ENCODE measurements at regions of chr11 and their contacts with region 1.

Region 1: GRCh38 chr11:118171269-118172062 is 5.0 kb downstream of the SCN2B start:
- DNase-seq: peak; percentile 82
- ATAC-seq: peak; percentile 90
- H3K4me3 Mint-ChIP-seq: no peak overlapping the region
- H3K27ac Mint-ChIP-seq: no peak overlapping the region
- H3K4me1 Mint-ChIP-seq: peaks cover 10% of the 10 kb centered on the region
- H3K27me3 Mint-ChIP-seq: peaks cover 16% of the 10 kb centered on the region

Region 2: DNA sequence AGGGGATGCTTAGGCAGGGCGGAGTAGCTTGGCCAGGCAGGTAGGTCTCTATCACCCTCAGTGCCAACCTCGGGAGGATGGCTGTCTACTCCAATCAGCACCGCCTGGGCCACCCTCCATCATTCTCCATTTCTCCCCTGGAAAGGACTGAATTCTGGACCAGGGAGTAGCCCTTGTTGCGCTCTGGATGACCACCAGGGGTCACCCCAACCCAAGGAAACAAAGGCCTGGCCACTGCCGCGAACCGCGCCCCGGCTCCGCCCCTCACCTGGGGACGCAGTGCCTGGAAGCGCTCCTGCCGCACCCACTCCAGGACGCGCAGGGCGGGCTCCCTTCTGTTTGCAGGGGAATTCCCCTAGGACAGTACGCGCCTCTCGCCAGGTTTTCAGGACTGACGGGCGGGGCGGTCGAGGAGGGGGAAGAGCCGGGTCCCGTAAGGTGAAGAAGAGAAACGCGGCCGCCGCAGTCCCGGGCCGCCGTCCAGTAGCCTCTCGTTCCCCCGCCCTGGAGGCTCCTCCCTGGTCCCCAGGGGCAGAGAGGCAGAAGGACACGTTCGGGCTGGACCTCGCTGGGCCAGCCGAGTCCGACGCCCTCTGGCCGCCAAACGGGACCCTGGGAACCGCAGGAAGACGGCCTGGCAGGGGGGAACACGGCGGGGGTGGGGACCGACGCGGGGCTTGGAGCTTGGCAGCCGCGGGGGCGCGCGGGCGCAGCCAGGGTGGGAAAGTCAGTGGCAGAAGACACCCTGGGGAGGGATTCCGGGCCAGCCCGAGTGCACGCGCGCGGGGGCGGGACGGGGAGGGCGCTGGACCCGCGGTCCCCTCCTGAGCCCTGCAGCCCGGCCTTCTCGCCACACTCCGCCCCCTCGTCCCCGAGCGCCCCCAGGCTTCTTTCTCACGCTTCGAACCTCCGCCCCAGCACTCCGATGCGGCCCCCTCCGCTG is 25.9 kb before region 1 on chr11:
- CTCF ChIA-PET with region 1: interaction called, 100 read pairs
- POLR2A ChIA-PET with region 1: no interaction called
- DNase-seq: peak; percentile 92
- ATAC-seq: peak; percentile 97
- H3K4me3 Mint-ChIP-seq: peak overlapping the region; percentile 79
- H3K27ac Mint-ChIP-seq: no peak overlapping the region
- H3K4me1 Mint-ChIP-seq: peaks cover 19% of the 10 kb centered on the region
- H3K27me3 Mint-ChIP-seq: peaks cover 54% of the 10 kb centered on the region

Region 3: DNA sequence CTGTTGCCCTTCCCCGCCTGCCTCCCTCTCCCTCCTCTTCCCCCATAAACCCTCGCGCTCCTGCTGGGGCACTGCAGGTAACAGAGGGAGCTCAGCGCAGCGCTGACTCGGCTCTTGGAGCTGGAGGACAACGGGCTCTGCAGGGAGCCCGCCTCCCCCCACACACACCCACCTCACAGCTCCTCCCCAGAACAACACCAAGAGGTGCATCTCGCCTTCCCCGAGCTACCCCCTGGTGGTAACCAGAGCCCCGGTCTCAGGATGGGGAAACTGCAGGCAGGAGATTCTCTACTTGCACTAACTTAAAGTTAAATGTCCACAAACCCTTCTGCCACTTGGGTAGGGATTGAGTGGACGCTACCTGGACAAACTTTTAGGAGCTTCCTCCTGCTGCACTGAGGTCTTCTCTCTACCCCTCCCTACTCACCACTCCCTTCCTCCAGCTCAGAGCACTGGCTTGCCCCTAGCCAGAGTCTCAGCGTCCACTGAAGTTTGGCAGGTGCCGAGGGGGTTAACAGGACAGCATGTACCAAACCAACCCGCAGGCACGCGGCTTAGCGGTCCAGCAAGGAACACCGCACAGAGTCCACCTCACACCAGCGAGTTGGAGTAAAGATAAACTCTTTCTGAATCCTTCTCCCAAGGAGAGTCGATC is 14.8 kb before region 1 on chr11:
- CTCF ChIA-PET with region 1: interaction called, 83 read pairs
- POLR2A ChIA-PET with region 1: interaction called, 4 read pairs
- DNase-seq: peak; percentile 58
- ATAC-seq: peak; percentile 74
- H3K4me3 Mint-ChIP-seq: no peak overlapping the region
- H3K27ac Mint-ChIP-seq: no peak overlapping the region
- H3K4me1 Mint-ChIP-seq: peaks cover 29% of the 10 kb centered on the region
- H3K27me3 Mint-ChIP-seq: peaks cover 79% of the 10 kb centered on the region

Region 4: DNA sequence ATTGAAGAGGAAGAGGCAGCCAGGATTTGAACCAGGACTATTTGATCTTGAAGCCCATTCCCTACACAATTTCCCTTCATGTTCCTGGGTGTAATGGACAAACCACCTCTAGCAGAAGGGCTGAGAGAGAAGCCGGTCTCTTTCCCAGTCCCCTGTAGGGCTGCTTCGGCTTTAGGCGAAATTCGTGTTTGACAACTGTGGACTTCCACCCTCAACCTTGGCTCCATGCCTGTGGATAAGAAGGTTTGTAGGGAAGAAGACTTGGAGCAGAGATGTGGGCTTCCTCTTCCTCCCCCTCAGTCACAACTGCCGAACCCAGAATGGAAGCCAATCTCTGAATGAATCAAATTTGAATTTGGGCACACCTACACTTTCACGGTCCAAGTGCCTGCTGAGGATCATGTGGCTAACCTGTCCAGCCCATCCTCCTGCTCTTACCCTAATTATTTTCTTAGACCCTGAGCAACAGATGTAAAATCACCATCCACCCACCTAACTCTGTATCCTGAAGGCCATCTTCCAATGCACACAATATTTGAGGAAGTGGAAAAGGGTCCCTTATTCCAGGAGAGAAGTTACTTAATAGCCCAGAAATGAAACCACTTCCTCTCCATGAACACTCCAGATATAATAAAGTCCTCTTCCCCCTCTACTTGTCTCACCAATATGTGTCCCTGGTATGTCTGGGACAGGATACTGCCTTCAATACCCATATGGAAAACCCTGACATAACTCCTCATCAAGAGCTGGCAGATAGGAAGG is 15.1 kb after region 1 on chr11:
- CTCF ChIA-PET with region 1: interaction called, 44 read pairs
- POLR2A ChIA-PET with region 1: no interaction called
- DNase-seq: no peak
- ATAC-seq: no peak
- H3K4me3 Mint-ChIP-seq: no peak overlapping the region
- H3K27ac Mint-ChIP-seq: no peak overlapping the region
- H3K4me1 Mint-ChIP-seq: peaks cover 3% of the 10 kb centered on the region
- H3K27me3 Mint-ChIP-seq: peaks cover 31% of the 10 kb centered on the region

Region 5: GRCh38 chr11:118311518-118311917 is 140.1 kb after region 1 on chr11:
- CTCF ChIA-PET with region 1: no interaction called
- POLR2A ChIA-PET with region 1: no interaction called
- DNase-seq: no peak
- ATAC-seq: no peak
- H3K4me3 Mint-ChIP-seq: no peak overlapping the region
- H3K27ac Mint-ChIP-seq: no peak overlapping the region
- H3K4me1 Mint-ChIP-seq: peaks cover 94% of the 10 kb centered on the region
- H3K27me3 Mint-ChIP-seq: no peaks in the 10 kb centered on the region